Activated CD4-positive, alpha-beta T cell treated with anti-CD3 and anti-CD28 coated beads, Interleukin-2, amount 10 ng/mL, durations not matched to agents 24 days and 14 days (primary cell): ENCODE measurements at regions of chr10 and their contacts with region 1.

Region 1: GRCh38 chr10:95363303-95363912 is 72.6 kb upstream of the PDLIM1 start:
- DNase-seq: peak; percentile 89
- H3K4me3 Mint-ChIP-seq: no peak overlapping the region
- H3K27ac Mint-ChIP-seq: no peak overlapping the region
- H3K4me1 Mint-ChIP-seq: no peaks in the 10 kb centered on the region
- H3K27me3 Mint-ChIP-seq: peaks cover 18% of the 10 kb centered on the region

Region 2: GRCh38 chr10:94630017-94630688 is 733.3 kb before region 1 on chr10:
- intact Hi-C with region 1: loop called (anchors 5 kb)
- DNase-seq: peak; percentile 37
- H3K4me3 Mint-ChIP-seq: no peak overlapping the region
- H3K27ac Mint-ChIP-seq: no peak overlapping the region
- H3K4me1 Mint-ChIP-seq: peaks cover 2% of the 10 kb centered on the region
- H3K27me3 Mint-ChIP-seq: peaks cover 3% of the 10 kb centered on the region

Region 3: DNA sequence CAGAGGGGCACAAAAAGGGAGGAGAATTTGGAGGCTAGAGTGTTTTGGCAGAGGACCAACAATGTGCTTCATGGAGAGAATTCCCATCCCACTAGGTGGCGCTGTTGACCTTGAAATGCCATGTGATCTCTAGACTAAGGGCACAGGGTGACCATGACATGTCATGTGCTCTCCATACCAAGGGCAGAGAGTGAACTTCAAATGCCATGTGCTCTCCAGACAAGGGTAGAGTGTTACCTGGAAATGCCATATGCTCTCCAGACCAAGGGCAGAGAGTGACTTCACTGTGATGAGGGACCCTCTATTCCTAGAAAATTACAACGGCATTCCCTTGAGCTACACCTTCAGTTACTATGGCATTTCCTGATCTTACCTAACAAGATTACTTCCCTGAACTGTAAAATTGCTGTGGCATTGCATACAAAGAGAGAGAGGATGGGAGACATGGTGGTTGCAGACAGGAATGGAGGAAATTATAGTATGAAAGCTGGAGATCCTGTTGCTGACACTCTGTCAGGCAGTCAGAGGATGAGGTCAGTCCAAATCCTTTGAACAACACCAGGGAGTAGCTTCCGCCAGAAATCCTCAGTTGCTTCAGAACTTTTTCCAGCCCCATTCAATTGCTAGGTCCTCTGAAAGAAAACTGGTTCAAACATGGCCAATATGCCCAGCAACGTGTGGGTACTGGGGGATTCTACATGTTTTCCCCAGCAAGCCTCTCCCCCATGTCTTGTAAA is 230.2 kb before region 1 on chr10:
- intact Hi-C with region 1: loop called (anchors 1 kb)
- DNase-seq: peak; percentile 93
- H3K4me3 Mint-ChIP-seq: no peak overlapping the region
- H3K27ac Mint-ChIP-seq: no peak overlapping the region
- H3K4me1 Mint-ChIP-seq: peaks cover 3% of the 10 kb centered on the region
- H3K27me3 Mint-ChIP-seq: peaks cover 4% of the 10 kb centered on the region

Region 4: DNA sequence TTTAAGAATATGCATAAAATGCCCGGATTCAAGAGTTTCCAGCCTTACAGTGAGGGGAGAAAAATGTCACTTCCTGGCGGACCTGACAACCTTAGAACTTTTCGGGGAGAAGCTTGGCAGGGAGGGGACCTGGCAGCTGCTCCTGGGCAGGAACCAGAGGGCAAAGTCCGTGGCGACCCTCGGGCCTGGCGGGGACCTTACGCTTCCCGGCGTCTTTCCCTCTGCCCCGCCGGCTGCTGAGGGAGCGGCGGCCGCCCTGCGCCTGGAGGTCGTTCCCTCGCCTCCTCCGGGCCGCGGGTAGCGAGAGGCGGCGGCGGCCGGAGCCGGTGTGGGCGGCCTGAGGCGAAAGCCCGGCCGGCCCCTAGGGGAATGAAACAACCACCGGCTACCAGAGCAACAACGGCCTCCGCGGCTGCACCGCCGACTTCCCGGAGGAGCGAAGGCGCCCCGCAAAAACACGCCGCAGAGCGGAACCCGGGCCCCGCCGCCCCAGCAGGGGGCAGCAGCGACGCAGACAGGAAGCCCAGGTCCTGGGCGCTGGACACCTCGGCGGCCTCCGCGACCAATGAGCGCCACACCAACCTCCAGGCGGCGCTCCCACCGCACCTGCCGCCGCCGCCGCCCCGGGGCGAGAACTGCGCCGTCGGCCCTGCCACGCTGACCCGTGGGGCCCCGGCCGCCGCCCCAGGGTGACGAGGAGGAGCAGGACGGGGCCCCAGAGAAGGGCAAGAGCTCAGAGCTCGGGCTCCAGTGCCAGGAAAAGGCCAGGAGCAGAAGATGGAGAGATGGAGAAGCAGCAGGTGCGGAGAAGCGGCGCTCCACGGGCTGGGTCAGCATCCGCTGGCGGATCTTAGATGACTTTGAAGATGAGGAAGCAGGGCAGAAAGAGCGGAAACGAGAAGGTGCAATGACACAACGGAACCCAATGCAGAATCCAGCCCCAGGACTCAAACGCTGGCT is 179.9 kb before region 1 on chr10:
- intact Hi-C with region 1: loop called (anchors 1 kb)
- DNase-seq: peak; percentile 95
- H3K4me3 Mint-ChIP-seq: peak overlapping the region; percentile 85
- H3K27ac Mint-ChIP-seq: peak overlapping the region; percentile 34
- H3K4me1 Mint-ChIP-seq: peaks cover 9% of the 10 kb centered on the region
- H3K27me3 Mint-ChIP-seq: peaks cover 50% of the 10 kb centered on the region

Region 5: DNA sequence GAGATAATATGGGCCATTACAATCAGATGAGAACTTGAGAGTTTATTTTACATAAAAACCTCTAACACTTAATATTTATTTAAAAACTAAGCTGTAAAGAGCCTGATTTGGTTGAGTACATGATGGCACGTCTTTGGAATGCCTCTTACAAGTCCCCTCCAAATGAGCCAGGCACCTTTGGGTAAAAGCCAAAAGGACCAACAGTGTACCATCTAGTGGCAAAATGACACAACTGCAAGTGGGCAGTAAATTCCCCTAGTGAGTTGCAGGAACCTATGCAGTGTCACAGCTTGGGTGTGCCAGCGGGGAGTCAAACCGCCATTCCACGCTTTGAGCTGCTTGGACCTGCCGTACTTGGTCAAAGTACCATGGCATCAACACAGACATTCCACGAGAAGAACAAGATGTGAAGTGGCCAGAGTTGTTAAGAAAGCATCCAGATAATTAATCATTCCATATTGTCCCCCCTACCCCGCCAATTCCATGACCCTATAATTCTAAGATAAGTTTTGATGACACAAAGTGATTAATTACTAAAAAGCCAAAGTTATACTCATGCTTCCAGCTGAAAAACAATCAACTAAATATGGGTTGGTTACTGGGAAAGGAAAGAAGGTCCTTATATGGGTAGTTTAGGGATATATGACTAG is 82.6 kb after region 1 on chr10:
- intact Hi-C with region 1: no loop called
- DNase-seq: peak; percentile 78
- H3K4me3 Mint-ChIP-seq: no peak overlapping the region
- H3K27ac Mint-ChIP-seq: no peak overlapping the region
- H3K4me1 Mint-ChIP-seq: peaks cover 2% of the 10 kb centered on the region
- H3K27me3 Mint-ChIP-seq: peaks cover 21% of the 10 kb centered on the region